ENCODE measurements at regions of chr15 and their contacts with region 1.

Region 1: GRCh38 chr15:68939221-68939900 is 9.0 kb downstream of the SPESP1 start:
- DNase-seq: no peak
- H3K4me3 ChIP-seq: no peak overlapping the region
- H3K27ac ChIP-seq: no peak overlapping the region
- H3K4me1 ChIP-seq: no peaks in the 10 kb centered on the region
- H3K27me3 ChIP-seq: peaks cover 2 to 10% of the 10 kb centered on the region in 2 experiments
- CTCF ChIP-seq: no peak
- POLR2A ChIP-seq: no peak

Region 2: GRCh38 chr15:68924866-68925560 is 14.3 kb before region 1 on chr15:
- CTCF ChIA-PET with region 1: interaction called, 13 read pairs
- POLR2A ChIA-PET with region 1: no interaction called
- dilution Hi-C with region 1: no loop called
- intact Hi-C with region 1: no loop called
- DNase-seq: peak; percentile 75
- H3K4me3 ChIP-seq: no peak overlapping the region
- H3K27ac ChIP-seq: no peak overlapping the region
- H3K4me1 ChIP-seq: no peaks in the 10 kb centered on the region
- H3K27me3 ChIP-seq: peaks cover 5 to 37% of the 10 kb centered on the region in 2 experiments
- CTCF ChIP-seq: peak; percentile 72 to 78
- POLR2A ChIP-seq: no peak

Measured in endothelial cell of umbilical vein (primary cell).